B cell (primary cell): ENCODE measurements at regions of chr5 and their contacts with region 1.

Region 1: DNA sequence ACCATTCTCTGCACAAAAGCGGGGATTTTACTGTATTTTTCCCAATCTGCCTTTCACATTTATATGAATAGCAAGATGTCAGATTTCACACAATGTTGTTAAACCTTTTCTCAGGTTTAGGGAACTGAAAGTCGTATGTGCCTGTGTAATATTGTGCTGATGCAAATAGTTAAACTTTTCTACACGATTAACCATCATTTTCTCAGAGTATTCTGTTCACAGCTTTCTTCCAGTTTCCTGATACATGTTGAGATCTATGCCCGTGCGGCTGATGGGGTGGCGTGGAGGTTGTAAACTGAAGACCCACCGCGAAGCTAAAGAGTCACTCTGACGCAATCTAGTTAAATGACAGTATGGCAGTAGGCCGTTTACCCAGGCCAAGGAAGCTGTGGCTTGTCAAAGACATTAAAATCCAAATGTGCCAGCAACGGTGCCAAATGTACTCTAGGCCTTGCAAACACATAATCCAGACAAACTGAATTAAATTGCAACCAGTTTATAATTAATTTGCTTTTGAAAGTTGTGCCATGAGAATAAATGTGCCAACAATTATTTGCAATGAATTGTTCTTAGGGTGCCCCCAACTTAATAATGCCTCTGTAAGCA is 145.7 kb downstream of the EBF1 start:
- DNase-seq: peak; percentile 89
- ATAC-seq: peak; percentile 79
- H3K4me3 ChIP-seq: peak overlapping the region in 4 of 5 experiments; percentile 1 to 51 (median 20)
- H3K4me3 Mint-ChIP-seq: peak overlapping the region; percentile 68
- H3K27ac ChIP-seq: peak overlapping the region; percentile 82 to 84
- H3K27ac Mint-ChIP-seq: peak overlapping the region; percentile 88
- H3K4me1 ChIP-seq: peaks cover 91 to 93% of the 10 kb centered on the region in 2 donors
- H3K4me1 Mint-ChIP-seq: peaks cover 94% of the 10 kb centered on the region
- H3K27me3 ChIP-seq: no peaks in the 10 kb centered on the region
- H3K27me3 Mint-ChIP-seq: no peaks in the 10 kb centered on the region
- CTCF ChIP-seq: no peak

Region 2: GRCh38 chr5:158770506-158770905 is 183.5 kb before region 1 on chr5:
- CTCF ChIA-PET with region 1: interaction called, 3 read pairs
- POLR2A ChIA-PET with region 1: interaction called, 3 read pairs
- intact Hi-C with region 1: loop called (anchors 10 kb)
- DNase-seq: peak; percentile 34
- ATAC-seq: no peak
- H3K4me3 ChIP-seq: peak overlapping the region in 1 of 5 experiments; percentile 4
- H3K4me3 Mint-ChIP-seq: peak overlapping the region; percentile 29
- H3K27ac ChIP-seq: peak overlapping the region in 1 of 2 donors; percentile 15
- H3K27ac Mint-ChIP-seq: peak overlapping the region; percentile 12
- H3K4me1 ChIP-seq: peaks cover 71 to 79% of the 10 kb centered on the region in 2 donors
- H3K4me1 Mint-ChIP-seq: peaks cover 89% of the 10 kb centered on the region
- H3K27me3 ChIP-seq: no peaks in the 10 kb centered on the region
- H3K27me3 Mint-ChIP-seq: no peaks in the 10 kb centered on the region
- CTCF ChIP-seq: no peak

Region 3: GRCh38 chr5:158875272-158875679 is 78.8 kb before region 1 on chr5:
- CTCF ChIA-PET with region 1: interaction called, 3 read pairs
- POLR2A ChIA-PET with region 1: no interaction called
- intact Hi-C with region 1: loop called (anchors 2 kb)
- DNase-seq: peak; percentile 70
- ATAC-seq: peak; percentile 41
- H3K4me3 ChIP-seq: peak overlapping the region in 2 of 5 experiments; percentile 12 to 34
- H3K4me3 Mint-ChIP-seq: peak overlapping the region; percentile 84
- H3K27ac ChIP-seq: peak overlapping the region; percentile 74 to 80
- H3K27ac Mint-ChIP-seq: peak overlapping the region; percentile 76
- H3K4me1 ChIP-seq: peaks cover 71 to 81% of the 10 kb centered on the region in 2 donors
- H3K4me1 Mint-ChIP-seq: peaks cover 89% of the 10 kb centered on the region
- H3K27me3 ChIP-seq: no peaks in the 10 kb centered on the region
- H3K27me3 Mint-ChIP-seq: no peaks in the 10 kb centered on the region
- CTCF ChIP-seq: no peak

Region 4: DNA sequence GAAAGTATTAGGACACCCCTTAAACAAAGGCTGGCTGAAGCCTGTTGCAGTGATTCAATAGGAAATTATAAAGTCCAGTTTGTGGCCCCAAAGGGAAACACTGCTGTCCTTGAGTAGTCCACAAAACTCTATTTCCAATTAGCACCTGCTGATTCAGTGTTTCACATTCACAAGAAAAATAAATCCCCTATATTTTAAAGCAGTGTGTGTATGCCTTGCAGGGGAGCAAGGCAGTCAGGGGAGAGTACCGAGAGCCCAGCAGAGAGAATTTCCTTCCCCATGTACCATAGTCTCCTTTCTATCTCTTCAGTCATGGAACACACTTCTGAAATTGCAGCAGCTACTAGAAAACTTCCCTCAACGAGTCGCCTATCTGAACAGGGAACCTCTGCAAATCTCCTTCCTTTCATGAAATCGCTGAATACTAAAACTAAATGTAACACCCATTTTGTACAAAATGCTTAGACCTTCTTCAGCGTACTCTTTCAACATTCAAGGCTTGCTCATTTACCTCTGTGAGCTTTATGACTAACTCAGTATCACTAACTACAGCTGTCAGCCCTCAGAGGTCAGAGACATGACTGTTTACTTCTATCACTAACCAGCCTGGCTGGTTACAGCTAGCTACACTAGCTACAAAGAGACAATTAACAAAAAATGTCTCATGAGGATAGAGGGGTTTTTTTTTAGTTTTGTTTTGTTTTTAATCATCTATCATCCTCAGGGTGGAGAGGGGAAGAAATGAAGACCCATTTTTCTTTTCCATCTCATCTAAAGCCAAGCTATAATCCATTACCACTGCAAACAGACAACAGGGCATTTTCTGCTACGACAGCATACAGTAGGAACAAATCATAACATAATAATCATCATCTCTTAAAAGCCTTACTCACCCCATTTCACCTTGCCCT is 43.0 kb before region 1 on chr5:
- CTCF ChIA-PET with region 1: no interaction called
- POLR2A ChIA-PET with region 1: no interaction called
- intact Hi-C with region 1: loop called (anchors 5 kb)
- DNase-seq: peak; percentile 32
- ATAC-seq: peak; percentile 60
- H3K4me3 ChIP-seq: no peak overlapping the region
- H3K4me3 Mint-ChIP-seq: peak overlapping the region; percentile 60
- H3K27ac ChIP-seq: peak overlapping the region in 1 of 2 donors; percentile 55
- H3K27ac Mint-ChIP-seq: peak overlapping the region; percentile 46
- H3K4me1 ChIP-seq: peaks cover 35 to 45% of the 10 kb centered on the region in 2 donors
- H3K4me1 Mint-ChIP-seq: peaks cover 92% of the 10 kb centered on the region
- H3K27me3 ChIP-seq: no peaks in the 10 kb centered on the region
- H3K27me3 Mint-ChIP-seq: no peaks in the 10 kb centered on the region
- CTCF ChIP-seq: no peak

Region 5: GRCh38 chr5:159010661-159011442 is 56.8 kb after region 1 on chr5:
- CTCF ChIA-PET with region 1: interaction called, 4 read pairs
- POLR2A ChIA-PET with region 1: no interaction called
- intact Hi-C with region 1: loop called (anchors 2 kb)
- DNase-seq: peak; percentile 69
- ATAC-seq: peak; percentile 81
- H3K4me3 ChIP-seq: peak overlapping the region; percentile 29 to 62 (median 50)
- H3K4me3 Mint-ChIP-seq: peak overlapping the region; percentile 83
- H3K27ac ChIP-seq: peak overlapping the region; percentile 79 to 89
- H3K27ac Mint-ChIP-seq: peak overlapping the region; percentile 94
- H3K4me1 ChIP-seq: peaks cover 48 to 66% of the 10 kb centered on the region in 2 donors
- H3K4me1 Mint-ChIP-seq: peaks cover 84% of the 10 kb centered on the region
- H3K27me3 ChIP-seq: no peaks in the 10 kb centered on the region
- H3K27me3 Mint-ChIP-seq: no peaks in the 10 kb centered on the region
- CTCF ChIP-seq: no peak

Region 6: GRCh38 chr5:159100025-159100781 is 146.2 kb after region 1 on chr5:
- CTCF ChIA-PET with region 1: interaction called, 4 read pairs
- POLR2A ChIA-PET with region 1: interaction called, 3 read pairs
- intact Hi-C with region 1: loop called (anchors 1 kb)
- DNase-seq: peak; percentile 96
- ATAC-seq: peak; percentile 70
- H3K4me3 ChIP-seq: peak overlapping the region; percentile 86 to 99 (median 90)
- H3K4me3 Mint-ChIP-seq: peak overlapping the region; percentile 100
- H3K27ac ChIP-seq: peak overlapping the region; percentile 79 to 92
- H3K27ac Mint-ChIP-seq: peak overlapping the region; percentile 96
- H3K4me1 ChIP-seq: peaks cover 62% of the 10 kb centered on the region in 2 donors
- H3K4me1 Mint-ChIP-seq: peaks cover 66% of the 10 kb centered on the region
- H3K27me3 ChIP-seq: no peaks in the 10 kb centered on the region
- H3K27me3 Mint-ChIP-seq: no peaks in the 10 kb centered on the region
- CTCF ChIP-seq: no peak